Heart right ventricle (tissue), 16 donors: ENCODE measurements at regions of chr6 and their contacts with region 1.

Region 1: GRCh38 chr6:142474531-142475289 is 172.9 kb downstream of the ADGRG6 start:
- DNase-seq: no peak
- ATAC-seq: no peak
- H3K4me3 ChIP-seq: no peak overlapping the region
- H3K27ac ChIP-seq: no peak overlapping the region
- H3K4me1 ChIP-seq: no peaks in the 10 kb centered on the region
- H3K27me3 ChIP-seq: no peaks in the 10 kb centered on the region
- CTCF ChIP-seq: peak; percentile 70 to 89 (median 81)

Region 2: DNA sequence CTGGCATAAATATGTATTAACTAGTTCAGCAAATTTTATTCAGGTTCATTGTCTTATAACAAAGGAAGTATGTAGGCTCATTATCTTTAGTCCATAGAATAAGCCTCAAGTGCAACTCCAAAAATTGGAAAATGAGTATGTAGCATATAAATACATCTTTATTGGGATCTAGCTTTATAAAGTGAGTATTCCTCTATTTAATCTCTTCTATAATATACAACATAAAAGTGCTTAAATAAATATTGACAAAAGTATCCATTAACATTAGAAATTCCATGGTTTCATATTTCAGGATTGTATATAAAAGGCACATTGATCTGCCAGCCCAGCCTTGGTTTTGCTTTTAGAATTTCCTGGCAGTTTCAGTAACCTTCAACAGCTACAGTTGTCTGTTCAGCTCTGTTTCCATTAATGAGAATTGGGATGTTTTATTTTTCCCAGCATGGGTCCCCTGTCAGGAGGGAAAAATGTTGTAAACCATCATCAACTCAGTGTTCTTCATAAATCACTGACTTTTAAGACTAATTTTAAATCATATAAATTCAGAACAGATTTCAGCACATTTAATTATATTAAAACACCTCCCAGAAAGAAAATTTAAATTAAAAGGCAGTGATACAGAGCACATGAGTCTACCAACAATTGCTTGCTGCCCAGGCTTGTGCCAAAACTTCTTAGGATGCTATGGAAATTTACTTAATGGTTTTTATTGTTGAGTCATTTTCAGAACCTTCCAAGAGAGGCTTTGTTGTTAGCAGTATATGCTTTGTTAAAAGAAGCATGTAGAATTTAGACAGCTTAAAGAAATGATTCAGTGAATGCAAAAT is 53.2 kb before region 1 on chr6:
- intact Hi-C with region 1: no loop called
- DNase-seq: no peak
- ATAC-seq: no peak
- H3K4me3 ChIP-seq: no peak overlapping the region
- H3K27ac ChIP-seq: no peak overlapping the region
- H3K4me1 ChIP-seq: peaks cover 0 to under 1% (median 0%) of the 10 kb centered on the region in 9 donors
- H3K27me3 ChIP-seq: no peaks in the 10 kb centered on the region
- CTCF ChIP-seq: no peak

Region 3: DNA sequence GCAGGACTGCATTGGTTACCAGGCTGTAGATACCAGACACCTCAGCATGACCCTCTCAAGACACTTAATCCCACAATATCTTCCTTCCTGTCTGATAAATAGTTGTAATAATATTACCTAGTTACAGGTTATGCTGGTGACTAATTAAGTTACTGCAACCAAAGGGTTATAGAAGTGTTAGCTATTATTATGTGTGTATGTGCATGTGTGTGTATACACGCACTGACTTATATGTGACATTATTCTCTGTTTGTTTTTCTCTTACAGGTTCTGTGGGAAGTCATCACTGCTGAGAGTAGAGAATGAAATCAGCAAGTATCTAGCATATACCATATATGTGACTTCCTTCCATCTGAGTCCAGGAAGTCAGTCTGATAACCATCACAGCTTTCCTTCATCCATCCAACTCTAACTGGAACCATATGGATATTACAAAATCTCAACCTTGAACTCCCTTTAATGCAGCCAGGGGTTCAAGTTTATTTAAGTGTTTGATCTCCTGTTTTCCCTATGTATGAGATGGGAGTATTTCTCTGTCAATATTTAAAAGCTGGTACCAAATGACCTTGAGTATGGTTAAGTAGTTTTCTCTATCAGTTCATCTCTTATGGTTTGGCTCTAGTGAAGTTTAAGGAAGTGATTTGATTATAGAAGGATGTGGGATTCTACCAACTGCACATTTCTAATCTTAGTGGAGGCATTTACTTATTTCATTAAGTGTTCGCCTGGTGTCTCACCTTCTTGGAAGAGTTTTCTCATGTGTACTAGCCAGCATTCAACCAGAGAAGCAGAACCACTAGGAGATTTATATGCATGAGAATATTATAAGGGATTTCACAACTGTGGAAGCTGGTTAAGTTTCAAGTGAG is 157.0 kb after region 1 on chr6:
- intact Hi-C with region 1: no loop called
- DNase-seq: no peak
- ATAC-seq: no peak
- H3K4me3 ChIP-seq: no peak overlapping the region
- H3K27ac ChIP-seq: no peak overlapping the region
- H3K4me1 ChIP-seq: no peaks in the 10 kb centered on the region
- H3K27me3 ChIP-seq: peaks cover 0 to 2% (median 0%) of the 10 kb centered on the region in 7 donors
- CTCF ChIP-seq: no peak

Region 4: DNA sequence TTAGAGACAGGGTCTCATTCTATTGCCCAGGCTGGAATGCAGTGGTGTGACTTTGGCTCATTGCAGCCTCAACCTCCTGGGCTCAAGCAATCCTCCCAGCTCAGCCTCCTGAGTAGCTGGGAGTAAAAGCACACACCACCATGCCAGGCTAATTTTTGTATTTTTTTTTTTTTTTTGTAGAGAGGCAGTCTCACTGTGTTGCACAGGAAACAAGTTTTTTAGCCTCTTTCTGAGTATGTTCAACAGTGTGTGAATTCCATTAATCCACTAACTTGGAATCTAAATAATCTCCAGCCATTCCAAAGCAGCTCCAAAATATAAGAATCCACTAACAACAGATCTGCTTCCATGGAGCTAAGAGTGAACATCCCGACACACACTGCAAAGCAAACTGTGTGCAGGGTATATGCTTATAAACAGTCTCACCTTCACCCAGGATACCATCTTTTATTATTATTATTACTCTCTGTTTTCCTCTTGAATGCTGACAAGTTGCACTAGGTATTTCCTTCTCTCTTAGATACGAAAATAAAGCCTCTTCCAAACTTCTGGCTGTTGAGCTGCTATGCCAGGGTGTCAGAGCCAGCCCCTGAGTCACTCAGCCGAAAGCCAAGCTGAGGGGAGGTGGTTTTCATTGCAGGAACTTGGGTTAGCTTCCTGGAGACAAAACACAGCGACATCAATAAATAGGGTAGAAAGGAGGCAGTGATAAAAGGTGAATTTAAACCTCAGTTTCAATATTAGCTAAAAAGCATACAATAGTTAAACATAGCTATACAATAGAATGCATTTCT is 205.4 kb after region 1 on chr6:
- intact Hi-C with region 1: loop called in 5 of 10 experiments (anchors 5 to 10 kb)
- DNase-seq: no peak
- ATAC-seq: peak in 2 of 8 donors; percentile 29 to 31
- H3K4me3 ChIP-seq: no peak overlapping the region
- H3K27ac ChIP-seq: no peak overlapping the region
- H3K4me1 ChIP-seq: no peaks in the 10 kb centered on the region
- H3K27me3 ChIP-seq: peaks cover 0 to 25% (median 5%) of the 10 kb centered on the region in 7 donors
- CTCF ChIP-seq: no peak

Region 5: DNA sequence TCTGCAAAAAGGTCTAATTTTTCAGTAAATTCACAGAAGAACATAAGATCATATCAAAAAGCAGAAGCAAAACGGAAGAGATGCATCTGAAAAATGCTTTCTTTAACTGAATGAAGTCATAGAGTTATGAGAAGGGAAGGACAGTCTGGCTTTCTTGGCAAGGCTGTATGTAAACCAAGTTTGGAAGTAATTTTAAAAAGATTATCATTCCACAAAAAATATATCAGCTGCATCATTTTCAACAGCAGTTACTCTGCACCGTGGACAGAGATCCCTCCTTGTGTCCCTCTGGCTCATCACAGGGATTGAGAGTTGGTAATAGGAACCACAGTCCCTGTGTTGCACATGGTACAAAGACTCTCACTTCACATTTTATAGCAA is 211.8 kb after region 1 on chr6:
- intact Hi-C with region 1: loop called in 5 of 10 experiments (anchors 5 to 10 kb)
- DNase-seq: no peak
- ATAC-seq: no peak
- H3K4me3 ChIP-seq: no peak overlapping the region
- H3K27ac ChIP-seq: no peak overlapping the region
- H3K4me1 ChIP-seq: no peaks in the 10 kb centered on the region
- H3K27me3 ChIP-seq: peaks cover 0 to 5% (median 0%) of the 10 kb centered on the region in 7 donors
- CTCF ChIP-seq: no peak

Region 6: DNA sequence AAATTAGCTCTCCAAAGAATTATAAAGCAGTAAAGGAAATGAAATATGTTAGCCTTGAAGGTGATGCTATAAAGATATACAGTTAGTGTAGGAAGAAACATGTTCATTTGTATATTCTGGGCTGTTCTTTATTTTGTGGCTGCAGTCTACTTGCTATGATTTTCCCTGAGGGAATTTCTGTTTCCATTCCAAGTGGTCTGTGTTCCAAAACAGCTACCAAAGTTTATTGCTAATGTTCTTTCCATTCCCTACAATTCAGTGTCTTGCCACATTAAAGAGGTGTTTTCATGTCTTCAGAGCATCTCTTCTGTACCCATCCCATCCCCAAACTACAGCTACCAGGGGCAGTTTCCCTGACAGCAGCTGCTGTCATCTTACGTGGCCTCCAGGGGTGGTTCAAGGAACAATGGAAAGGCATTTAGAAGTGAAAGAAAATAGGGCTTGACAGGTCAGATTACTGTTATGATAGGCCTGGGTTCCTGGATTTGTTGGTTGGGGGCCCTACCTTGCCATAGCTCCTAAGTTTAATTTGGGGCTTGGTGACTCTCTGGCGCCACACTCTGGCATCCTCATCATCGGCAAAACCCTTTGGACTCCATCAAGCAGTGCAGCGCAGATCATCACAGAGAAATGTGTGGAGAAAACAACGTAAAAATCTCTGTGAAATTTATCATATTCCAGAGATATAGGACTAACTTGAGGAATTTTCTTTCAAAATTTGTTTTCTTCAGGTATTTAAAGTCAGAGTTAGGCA is 552.2 kb after region 1 on chr6:
- intact Hi-C with region 1: loop called in 1 of 10 experiments (anchors 10 kb)
- DNase-seq: peak; percentile 26 to 27
- ATAC-seq: peak in 6 of 8 donors; percentile 55 to 78 (median 60)
- H3K4me3 ChIP-seq: no peak overlapping the region
- H3K27ac ChIP-seq: no peak overlapping the region
- H3K4me1 ChIP-seq: no peaks in the 10 kb centered on the region
- H3K27me3 ChIP-seq: no peaks in the 10 kb centered on the region
- CTCF ChIP-seq: peak; percentile 47 to 78 (median 70)